Psoas muscle (tissue), 8 donors: ENCODE measurements at regions of chr2 and their contacts with region 1.

Region 1: DNA sequence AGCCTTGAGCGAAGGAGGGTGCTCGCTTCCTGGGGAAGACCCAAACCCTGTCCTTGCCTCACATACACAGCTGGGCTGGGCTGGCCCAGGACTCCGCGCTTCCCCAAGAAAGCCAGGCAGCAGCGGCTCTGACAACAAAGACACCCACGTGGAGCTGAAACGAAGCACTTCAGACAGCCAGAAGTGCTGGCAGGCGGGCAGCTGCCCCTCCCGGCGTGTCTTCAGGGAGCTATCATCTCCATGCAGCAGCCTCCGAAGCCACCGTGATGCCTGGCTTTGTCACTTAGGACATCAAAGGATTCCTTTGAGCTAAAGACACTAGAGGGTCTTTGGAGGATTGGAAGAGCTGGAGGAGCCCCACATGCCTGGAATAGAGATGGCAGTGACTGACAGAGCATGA is 35.2 kb downstream of the C1QL2 start:
- DNase-seq: no peak
- ATAC-seq: no peak
- H3K4me3 ChIP-seq: no peak overlapping the region
- H3K27ac ChIP-seq: no peak overlapping the region
- H3K4me1 ChIP-seq: no peaks in the 10 kb centered on the region
- H3K27me3 ChIP-seq: peaks cover 0 to 11% (median 4%) of the 10 kb centered on the region in 3 donors
- CTCF ChIP-seq: no peak

Region 2: DNA sequence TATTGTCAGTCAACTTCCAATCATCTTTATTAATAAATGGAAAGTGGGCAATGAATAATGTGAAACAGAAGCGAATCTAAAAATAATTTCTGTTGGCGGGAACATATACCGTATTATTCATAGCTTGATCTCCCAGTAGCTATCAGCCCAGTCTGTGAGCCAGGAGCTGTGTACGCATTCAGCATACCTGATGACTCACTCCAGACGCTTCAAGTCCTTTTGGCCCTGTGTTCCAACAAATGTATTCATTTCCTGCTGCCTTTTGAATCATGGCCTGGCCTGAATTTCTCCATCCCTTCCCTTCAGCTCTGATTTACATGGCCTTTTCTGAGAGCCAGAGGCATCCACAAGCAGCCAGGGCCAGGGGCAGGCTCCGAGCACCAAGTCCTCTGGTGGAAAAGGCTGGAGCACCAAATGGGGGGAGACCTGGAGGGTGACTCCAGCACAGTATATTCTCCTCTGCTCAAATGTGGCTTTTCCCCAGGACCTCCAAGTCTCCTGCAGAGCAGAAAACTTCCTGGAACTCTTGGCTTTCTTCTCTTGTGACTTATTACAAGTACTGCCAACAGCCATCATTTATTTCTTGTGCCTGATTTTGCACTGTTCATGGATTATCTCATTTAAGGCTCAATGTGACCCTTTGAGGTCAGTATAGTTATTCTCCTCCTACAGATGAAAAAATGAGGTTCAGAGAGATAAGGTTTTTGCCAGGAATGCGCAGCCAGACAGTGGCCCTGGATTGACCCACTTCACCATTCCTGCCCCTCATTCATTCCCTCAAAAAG is 384.7 kb before region 1 on chr2:
- intact Hi-C with region 1: no loop called
- DNase-seq: peak in 1 of 2 donors; percentile 52
- ATAC-seq: peak; percentile 65 to 98 (median 92)
- H3K4me3 ChIP-seq: no peak overlapping the region
- H3K27ac ChIP-seq: no peak overlapping the region
- H3K4me1 ChIP-seq: no peaks in the 10 kb centered on the region
- H3K27me3 ChIP-seq: peaks cover 0 to 2% (median 0%) of the 10 kb centered on the region in 3 donors
- CTCF ChIP-seq: no peak

Region 3: GRCh38 chr2:119134775-119135174 is 11.4 kb after region 1 on chr2:
- intact Hi-C with region 1: loop called in 1 of 2 experiments (anchors 1 kb)
- DNase-seq: no peak
- ATAC-seq: no peak
- H3K4me3 ChIP-seq: no peak overlapping the region
- H3K27ac ChIP-seq: no peak overlapping the region
- H3K4me1 ChIP-seq: no peaks in the 10 kb centered on the region
- H3K27me3 ChIP-seq: peaks cover 0 to 44% (median 3%) of the 10 kb centered on the region in 3 donors
- CTCF ChIP-seq: no peak